Activated T-helper 2 cell treated with anti-CD3 and anti-CD28 coated beads, Interferon-gamma antibody, Interleukin-2, Interleukin-4, amounts not matched to agents 10 μg/mL and 5 μg/mL and 100 μg/mL, durations not matched to agents 14 hours and 24 hours and 36 hours (primary cell): ENCODE measurements at regions of chr19 and their contacts with region 1.

Region 1: DNA sequence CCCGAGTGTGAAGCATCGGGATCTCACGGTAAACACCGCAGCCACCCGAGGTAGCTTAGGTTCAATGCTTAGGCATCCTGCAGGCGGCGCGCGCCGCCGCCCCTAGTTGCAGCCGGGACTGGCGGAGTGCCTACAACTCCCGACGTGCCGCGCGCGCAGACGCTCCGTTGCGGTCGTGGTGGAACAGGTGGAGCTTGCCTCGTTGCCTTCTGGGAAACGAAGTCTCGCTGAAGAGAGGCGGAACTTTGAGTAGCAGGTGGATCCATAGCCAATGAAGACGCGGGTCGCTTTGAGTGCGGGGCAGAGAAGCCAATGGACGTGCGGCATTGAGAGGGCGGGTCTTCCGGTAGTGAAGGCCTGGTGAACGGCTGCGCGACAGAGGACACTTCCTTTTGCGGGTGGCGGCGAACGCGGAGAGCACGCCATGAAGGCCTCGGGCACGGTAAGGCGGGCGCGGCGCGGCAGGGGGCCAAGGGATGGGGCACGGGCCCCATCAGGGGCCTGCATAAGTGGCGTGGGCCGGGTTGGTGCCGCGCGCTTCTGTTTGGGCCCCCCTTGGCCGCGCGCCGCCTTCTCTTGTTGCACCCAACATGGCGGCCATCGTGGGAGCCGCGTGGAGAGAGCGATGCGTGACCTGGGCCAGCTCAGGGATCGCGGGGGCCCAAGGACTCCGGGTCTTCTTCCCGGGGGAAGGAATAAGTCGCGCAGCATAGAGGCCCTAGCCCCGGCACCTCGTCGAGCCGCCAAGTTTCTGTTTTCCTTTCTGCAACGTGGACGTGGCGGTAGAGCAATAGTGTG is at the start of gene RPL18A:
- DNase-seq: peak; percentile 99
- H3K4me3 Mint-ChIP-seq: peak within 1 kb of the TSS; percentile 99
- H3K27ac Mint-ChIP-seq: peak within 1 kb of the TSS; percentile 99
- H3K4me1 Mint-ChIP-seq: peaks cover 20% of the 10 kb centered on the region
- H3K27me3 Mint-ChIP-seq: no peaks in the 10 kb centered on the region
- total RNA-seq, gene RPL18A: 2,784 and 2,842 TPM in 2 replicates

Region 2: DNA sequence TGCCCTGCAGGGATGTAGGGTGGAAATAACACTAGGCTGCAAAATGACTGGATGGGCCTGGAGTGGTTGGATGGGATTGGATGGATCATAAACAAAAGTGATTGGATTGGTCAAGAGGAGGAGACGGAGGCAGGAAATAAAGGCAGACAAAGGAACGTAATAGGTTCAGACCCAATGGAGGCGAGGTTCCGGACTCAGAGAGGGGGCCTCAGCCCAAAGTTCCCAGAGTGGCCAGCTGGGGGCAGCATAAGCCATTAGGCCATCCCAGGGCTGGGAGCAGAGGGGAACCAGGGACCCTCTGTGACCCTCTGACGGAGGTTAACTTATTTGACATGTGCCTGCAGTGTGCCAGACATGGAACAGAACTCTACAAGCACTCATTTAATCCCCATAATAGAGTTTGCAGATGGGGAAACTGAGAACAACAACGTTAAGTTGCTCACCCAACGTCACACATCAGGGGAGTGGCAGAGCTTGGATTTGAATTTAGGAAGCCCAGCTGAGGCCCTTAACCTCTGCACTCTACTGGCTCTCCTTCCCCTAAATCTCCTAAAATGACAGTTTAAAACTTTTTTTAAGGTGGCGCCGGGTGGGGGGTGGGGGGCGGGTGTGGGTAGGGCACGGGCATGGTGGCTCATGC is 155.8 kb before region 1 on chr19:
- intact Hi-C with region 1: loop called (anchors 1 kb)
- DNase-seq: peak; percentile 50
- H3K4me3 Mint-ChIP-seq: no peak overlapping the region
- H3K27ac Mint-ChIP-seq: no peak overlapping the region
- H3K4me1 Mint-ChIP-seq: peaks cover 2% of the 10 kb centered on the region
- H3K27me3 Mint-ChIP-seq: peaks cover 2% of the 10 kb centered on the region

Region 3: GRCh38 chr19:17784201-17785008 is 75.3 kb before region 1 on chr19:
- intact Hi-C with region 1: loop called (anchors 5 kb)
- DNase-seq: peak; percentile 59
- H3K4me3 Mint-ChIP-seq: no peak overlapping the region
- H3K27ac Mint-ChIP-seq: no peak overlapping the region
- H3K4me1 Mint-ChIP-seq: peaks cover 3% of the 10 kb centered on the region
- H3K27me3 Mint-ChIP-seq: no peaks in the 10 kb centered on the region

Region 4: GRCh38 chr19:17841810-17842662 is 17.7 kb before region 1 on chr19:
- intact Hi-C with region 1: no loop called
- DNase-seq: peak; percentile 34
- H3K4me3 Mint-ChIP-seq: no peak overlapping the region
- H3K27ac Mint-ChIP-seq: no peak overlapping the region
- H3K4me1 Mint-ChIP-seq: peaks cover 17% of the 10 kb centered on the region
- H3K27me3 Mint-ChIP-seq: no peaks in the 10 kb centered on the region

Region 5: GRCh38 chr19:17873786-17874757 is 14.3 kb after region 1 on chr19:
- intact Hi-C with region 1: loop called (anchors 1 kb)
- DNase-seq: peak; percentile 56
- H3K4me3 Mint-ChIP-seq: peak overlapping the region; percentile 57
- H3K27ac Mint-ChIP-seq: peak overlapping the region; percentile 38
- H3K4me1 Mint-ChIP-seq: peaks cover 2% of the 10 kb centered on the region
- H3K27me3 Mint-ChIP-seq: peaks cover 2% of the 10 kb centered on the region

Region 6: GRCh38 chr19:18000935-18001778 is 141.4 kb after region 1 on chr19:
- intact Hi-C with region 1: loop called (anchors 5 kb)
- DNase-seq: peak; percentile 88
- H3K4me3 Mint-ChIP-seq: peak overlapping the region; percentile 91
- H3K27ac Mint-ChIP-seq: peak overlapping the region; percentile 98
- H3K4me1 Mint-ChIP-seq: peaks cover 11% of the 10 kb centered on the region
- H3K27me3 Mint-ChIP-seq: peaks cover 2% of the 10 kb centered on the region